ENCODE measurements at regions of chr20 and their contacts with region 1.

Region 1: GRCh38 chr20:4956200-4956810 is 45.0 kb downstream of the SLC23A2 start:
- DNase-seq: no peak
- H3K4me3 Mint-ChIP-seq: no peak overlapping the region
- H3K27ac Mint-ChIP-seq: no peak overlapping the region
- H3K4me1 Mint-ChIP-seq: peaks cover 10% of the 10 kb centered on the region
- H3K27me3 Mint-ChIP-seq: no peaks in the 10 kb centered on the region

Region 2: GRCh38 chr20:4607287-4607713 is 349.0 kb before region 1 on chr20:
- CTCF ChIA-PET with region 1: interaction called, 6 read pairs
- intact Hi-C with region 1: loop called (anchors 5 kb)
- DNase-seq: peak; percentile 74
- H3K4me3 Mint-ChIP-seq: no peak overlapping the region
- H3K27ac Mint-ChIP-seq: no peak overlapping the region
- H3K4me1 Mint-ChIP-seq: no peaks in the 10 kb centered on the region
- H3K27me3 Mint-ChIP-seq: peaks cover 2% of the 10 kb centered on the region

Region 3: DNA sequence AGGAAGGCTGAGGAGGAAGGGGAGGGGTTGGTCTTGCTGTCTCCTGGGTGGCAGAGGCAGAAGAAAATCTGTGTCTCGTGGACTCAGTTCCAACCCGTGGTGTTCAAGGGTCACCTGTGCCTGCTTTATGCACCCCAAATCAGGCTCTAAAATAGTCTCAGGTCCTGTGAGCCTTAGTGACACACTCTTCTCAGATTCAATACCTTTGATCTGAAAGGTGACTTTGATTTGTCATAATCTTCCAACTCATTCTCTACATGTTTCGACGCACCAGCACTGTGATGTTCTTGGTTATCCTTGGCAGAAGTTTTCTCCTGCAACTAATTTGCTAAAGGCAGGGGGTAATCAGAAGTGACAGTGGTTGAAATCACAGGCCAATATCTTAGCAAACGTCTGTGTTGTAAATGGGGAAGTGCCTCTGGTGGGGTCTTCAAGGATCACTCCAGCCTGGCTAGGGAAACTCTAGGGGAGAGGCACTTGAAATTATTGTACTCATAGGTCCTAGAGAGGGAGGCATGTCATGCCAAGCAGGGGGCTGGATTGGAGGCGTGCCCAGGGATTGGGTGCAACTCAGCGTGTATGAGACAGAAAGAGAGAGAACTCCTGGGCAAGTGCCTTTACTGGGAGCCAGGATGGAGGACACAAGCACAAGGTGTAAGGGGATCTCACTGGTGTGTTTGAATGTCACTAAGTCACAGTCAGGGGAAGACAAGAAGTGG is 253.6 kb before region 1 on chr20:
- CTCF ChIA-PET with region 1: no interaction called
- intact Hi-C with region 1: no loop called
- DNase-seq: no peak
- H3K4me3 Mint-ChIP-seq: no peak overlapping the region
- H3K27ac Mint-ChIP-seq: no peak overlapping the region
- H3K4me1 Mint-ChIP-seq: peaks cover 6% of the 10 kb centered on the region
- H3K27me3 Mint-ChIP-seq: no peaks in the 10 kb centered on the region

Region 4: DNA sequence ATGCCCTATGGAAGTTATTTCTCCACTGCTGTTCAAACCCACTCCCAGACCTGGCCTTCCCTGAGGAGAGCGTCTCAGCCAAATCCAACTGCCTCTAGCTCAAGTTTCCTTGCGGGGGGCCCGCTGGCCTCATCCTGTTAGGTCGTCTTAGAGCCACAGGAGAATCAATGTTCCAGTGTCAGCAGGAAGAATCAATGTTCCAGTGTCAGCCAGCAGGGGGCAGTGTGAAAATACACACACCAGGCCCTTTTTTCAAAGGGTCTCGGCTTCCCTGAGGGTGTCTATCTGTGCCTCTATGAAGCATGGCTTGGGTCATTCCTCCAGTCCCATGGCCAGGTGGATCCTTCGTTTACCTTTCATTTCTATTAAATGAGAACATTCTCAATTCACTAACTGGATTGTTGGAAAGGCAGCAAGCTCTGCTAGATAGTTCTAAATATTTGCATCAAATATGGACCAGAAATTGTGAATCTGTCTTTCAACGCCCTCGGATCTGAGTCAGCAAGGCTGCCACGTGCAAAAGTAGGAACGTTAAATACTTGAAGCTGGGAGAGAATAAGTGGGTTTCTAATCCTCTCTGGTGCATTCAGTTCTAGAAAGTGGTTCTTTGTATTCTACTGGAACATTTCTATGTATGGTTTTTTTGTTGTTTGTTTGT is 215.4 kb before region 1 on chr20:
- CTCF ChIA-PET with region 1: interaction called, 9 read pairs
- intact Hi-C with region 1: loop called (anchors 1 kb)
- DNase-seq: peak; percentile 79
- H3K4me3 Mint-ChIP-seq: no peak overlapping the region
- H3K27ac Mint-ChIP-seq: no peak overlapping the region
- H3K4me1 Mint-ChIP-seq: no peaks in the 10 kb centered on the region
- H3K27me3 Mint-ChIP-seq: peaks cover 3% of the 10 kb centered on the region

Region 5: GRCh38 chr20:4780245-4780644 is 176.1 kb before region 1 on chr20:
- CTCF ChIA-PET with region 1: interaction called, 3 read pairs
- intact Hi-C with region 1: loop called (anchors 1 kb)
- DNase-seq: no peak
- H3K4me3 Mint-ChIP-seq: no peak overlapping the region
- H3K27ac Mint-ChIP-seq: no peak overlapping the region
- H3K4me1 Mint-ChIP-seq: peaks cover 12% of the 10 kb centered on the region
- H3K27me3 Mint-ChIP-seq: no peaks in the 10 kb centered on the region

Region 6: DNA sequence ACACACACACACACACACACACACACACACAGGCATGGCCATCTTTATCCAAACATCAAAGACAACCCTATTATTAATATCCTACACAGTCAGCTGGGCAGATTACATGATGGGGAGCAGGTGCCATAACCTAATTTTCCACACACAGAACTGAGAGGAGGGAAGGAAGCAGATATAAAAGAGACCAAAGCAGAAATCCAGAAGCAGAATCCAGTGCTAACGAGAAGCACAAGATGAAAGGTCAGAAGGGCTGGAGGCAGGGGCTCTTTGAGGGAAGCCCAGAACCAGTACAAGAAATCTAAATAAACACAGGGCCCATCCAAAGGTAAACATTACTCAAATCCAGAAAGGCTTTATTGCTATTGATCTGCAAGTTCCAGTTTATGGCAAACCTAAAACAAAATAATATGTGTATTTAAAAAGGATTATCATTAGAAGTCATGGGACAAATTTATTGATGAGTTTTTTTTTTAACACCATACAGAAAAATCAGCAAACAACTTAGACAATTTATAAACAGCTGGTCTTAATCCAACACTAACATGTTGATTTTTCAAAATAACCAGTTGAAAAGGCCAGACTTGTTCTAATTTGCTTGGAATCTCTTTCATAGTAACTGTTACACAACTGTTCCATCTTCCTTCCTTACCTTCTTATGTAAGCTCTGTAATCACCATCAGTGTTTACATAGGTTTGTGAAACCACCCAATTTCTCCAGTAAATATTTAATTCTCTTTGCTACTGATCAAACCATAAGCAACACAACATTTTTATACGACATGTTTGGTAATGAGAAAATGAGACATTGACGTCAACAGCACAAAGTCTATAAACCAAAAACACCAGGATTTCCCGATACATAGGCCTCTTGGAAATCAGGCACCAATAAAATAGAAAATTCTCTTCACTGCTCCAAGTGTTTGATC is 10.8 kb after region 1 on chr20:
- CTCF ChIA-PET with region 1: interaction called, 11 read pairs
- intact Hi-C with region 1: no loop called
- DNase-seq: no peak
- H3K4me3 Mint-ChIP-seq: no peak overlapping the region
- H3K27ac Mint-ChIP-seq: no peak overlapping the region
- H3K4me1 Mint-ChIP-seq: peaks cover 10% of the 10 kb centered on the region
- H3K27me3 Mint-ChIP-seq: no peaks in the 10 kb centered on the region